ENCODE measurements at regions of chr10 and their contacts with region 1.

Region 1: DNA sequence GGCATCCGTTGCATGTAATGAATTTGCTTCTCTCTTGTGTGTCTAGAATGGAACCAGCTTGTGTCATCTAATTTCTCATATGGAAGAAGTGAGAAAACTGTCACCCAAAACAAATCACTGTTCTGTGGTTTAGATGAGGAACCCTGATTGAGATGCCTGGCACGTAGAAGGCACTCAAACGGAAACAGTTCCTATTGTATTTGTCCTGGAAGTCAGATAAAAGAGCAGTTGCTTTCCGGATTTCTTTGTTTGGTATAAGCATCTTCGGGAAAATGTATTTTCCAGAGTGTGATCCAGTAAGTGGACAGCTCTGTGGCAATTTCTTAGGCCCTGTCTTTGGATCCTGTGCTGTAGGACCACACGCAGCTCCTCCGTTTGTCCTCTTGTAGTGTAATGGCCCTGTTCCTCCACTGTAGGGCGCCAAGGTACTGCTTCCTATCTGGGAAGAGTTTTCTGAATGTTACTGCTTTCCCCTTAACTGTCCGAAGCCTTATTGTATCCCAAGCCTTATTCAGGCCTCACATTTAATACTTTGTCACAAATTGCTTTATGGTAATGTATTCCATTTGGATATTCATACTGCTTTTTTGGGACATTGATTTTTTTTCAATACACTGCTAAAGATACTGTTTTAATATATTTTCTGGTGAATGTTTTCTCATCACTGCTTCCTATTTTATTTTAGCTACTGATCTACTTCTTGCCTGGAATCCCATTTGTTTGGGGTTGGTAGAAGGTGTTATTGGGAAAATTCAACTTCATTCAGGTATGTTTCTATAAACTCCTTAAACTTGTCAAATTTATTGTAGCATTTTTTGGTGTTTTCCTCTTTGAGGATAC is 24.8 kb downstream of the INPP5F start:
- DNase-seq: peak; percentile 55
- H3K4me3 Mint-ChIP-seq: no peak overlapping the region
- H3K27ac Mint-ChIP-seq: no peak overlapping the region
- H3K4me1 Mint-ChIP-seq: peaks cover 12% of the 10 kb centered on the region
- H3K27me3 Mint-ChIP-seq: no peaks in the 10 kb centered on the region
- CTCF ChIP-seq: peak; percentile 69

Region 2: DNA sequence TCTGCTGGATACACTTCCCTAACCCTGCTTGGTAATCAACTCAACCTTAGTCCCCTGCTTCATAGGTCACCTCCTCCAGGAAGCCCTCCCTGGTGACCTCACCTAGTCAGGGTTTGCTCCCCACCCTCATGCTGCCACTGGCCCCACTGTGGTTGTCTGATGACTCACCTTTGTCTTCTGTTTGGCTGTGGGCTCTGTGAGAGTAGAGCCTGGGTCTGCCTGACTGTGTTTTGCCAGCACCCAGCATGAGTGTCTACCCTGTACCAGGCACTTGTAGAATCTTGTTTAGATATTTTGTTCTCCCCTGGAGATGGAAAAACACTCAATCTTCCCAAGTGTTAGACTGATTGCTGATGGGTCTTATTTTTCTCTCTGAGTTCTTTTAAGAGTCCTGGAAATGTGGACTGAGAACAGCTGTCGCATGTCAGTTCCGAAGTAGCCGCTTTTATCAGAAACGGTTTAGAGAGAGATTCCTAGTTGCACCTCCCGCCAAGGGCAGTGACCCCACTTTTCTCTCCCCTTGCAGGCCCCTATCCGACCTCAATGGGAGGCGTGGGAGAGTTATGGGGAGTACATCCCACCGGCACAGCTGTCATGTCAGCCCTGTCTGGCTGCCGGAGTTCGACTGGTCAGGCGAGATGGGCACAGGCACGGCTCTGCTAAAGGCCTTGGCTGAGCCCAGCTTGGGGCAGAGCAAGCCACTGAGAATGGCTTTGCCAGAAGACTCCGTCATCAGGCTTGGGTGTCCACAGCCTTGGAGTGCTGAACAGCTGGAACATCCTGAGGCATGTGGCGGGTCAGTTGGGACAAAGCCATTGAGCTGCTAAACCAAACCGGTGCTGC is 408.9 kb before region 1 on chr10:
- CTCF ChIA-PET with region 1: no interaction called
- intact Hi-C with region 1: no loop called
- DNase-seq: peak; percentile 18
- H3K4me3 Mint-ChIP-seq: no peak overlapping the region
- H3K27ac Mint-ChIP-seq: no peak overlapping the region
- H3K4me1 Mint-ChIP-seq: no peaks in the 10 kb centered on the region
- H3K27me3 Mint-ChIP-seq: peaks cover 15% of the 10 kb centered on the region
- CTCF ChIP-seq: no peak

Region 3: DNA sequence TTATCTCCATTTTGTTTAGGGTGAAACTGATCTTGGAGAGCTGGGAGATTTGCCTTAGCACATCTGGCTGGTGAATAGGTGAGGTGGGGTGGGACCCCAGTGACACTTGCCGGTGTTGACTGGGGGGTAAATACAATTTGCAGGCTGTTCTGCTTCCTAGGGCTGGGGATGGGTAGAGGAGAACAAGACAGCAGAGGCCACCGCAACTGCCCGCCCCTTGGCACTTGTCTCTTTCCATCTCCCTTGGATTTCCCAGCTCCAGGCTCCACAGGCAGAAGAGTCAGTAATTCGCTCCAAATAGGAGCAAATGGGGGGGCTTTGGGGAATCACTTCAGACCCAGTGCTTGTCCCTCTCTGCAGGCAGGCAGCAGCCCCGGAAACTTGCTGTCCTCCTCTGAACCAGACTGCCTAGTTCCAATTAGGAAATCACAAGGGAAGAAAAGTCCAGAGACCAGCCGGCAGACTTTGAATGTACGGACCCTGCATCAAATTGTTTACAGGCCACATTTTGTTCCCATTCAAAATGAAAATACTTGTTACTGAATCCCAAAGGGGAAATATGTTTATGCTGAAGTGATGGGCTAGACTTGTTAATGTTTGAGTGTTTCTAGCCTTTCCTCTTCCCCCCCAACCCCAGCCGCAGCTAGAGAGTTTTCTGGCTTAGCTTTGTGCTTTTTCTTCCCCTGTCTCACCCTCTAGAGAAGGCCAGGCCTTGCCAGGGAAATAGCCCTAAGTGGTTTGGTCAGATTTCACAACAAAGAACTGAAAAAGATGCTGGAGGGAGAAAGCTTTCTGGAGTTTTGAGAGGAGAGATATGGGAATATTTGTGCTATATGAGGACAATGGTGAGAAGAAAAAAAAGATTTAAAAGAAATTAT is 34.7 kb before region 1 on chr10:
- CTCF ChIA-PET with region 1: no interaction called
- intact Hi-C with region 1: no loop called
- DNase-seq: no peak
- H3K4me3 Mint-ChIP-seq: no peak overlapping the region
- H3K27ac Mint-ChIP-seq: no peak overlapping the region
- H3K4me1 Mint-ChIP-seq: no peaks in the 10 kb centered on the region
- H3K27me3 Mint-ChIP-seq: no peaks in the 10 kb centered on the region
- CTCF ChIP-seq: no peak

Region 4: GRCh38 chr10:119798736-119799135 is 48.1 kb after region 1 on chr10:
- CTCF ChIA-PET with region 1: no interaction called
- intact Hi-C with region 1: loop called (anchors 5 kb)
- DNase-seq: peak; percentile 1
- H3K4me3 Mint-ChIP-seq: no peak overlapping the region
- H3K27ac Mint-ChIP-seq: no peak overlapping the region
- H3K4me1 Mint-ChIP-seq: no peaks in the 10 kb centered on the region
- H3K27me3 Mint-ChIP-seq: no peaks in the 10 kb centered on the region
- CTCF ChIP-seq: no peak

Region 5: GRCh38 chr10:119834188-119834587 is 83.6 kb after region 1 on chr10:
- CTCF ChIA-PET with region 1: interaction called, 3 read pairs
- intact Hi-C with region 1: loop called (anchors 5 kb)
- DNase-seq: no peak
- H3K4me3 Mint-ChIP-seq: no peak overlapping the region
- H3K27ac Mint-ChIP-seq: no peak overlapping the region
- H3K4me1 Mint-ChIP-seq: peaks cover 8% of the 10 kb centered on the region
- H3K27me3 Mint-ChIP-seq: no peaks in the 10 kb centered on the region
- CTCF ChIP-seq: no peak

Region 6: DNA sequence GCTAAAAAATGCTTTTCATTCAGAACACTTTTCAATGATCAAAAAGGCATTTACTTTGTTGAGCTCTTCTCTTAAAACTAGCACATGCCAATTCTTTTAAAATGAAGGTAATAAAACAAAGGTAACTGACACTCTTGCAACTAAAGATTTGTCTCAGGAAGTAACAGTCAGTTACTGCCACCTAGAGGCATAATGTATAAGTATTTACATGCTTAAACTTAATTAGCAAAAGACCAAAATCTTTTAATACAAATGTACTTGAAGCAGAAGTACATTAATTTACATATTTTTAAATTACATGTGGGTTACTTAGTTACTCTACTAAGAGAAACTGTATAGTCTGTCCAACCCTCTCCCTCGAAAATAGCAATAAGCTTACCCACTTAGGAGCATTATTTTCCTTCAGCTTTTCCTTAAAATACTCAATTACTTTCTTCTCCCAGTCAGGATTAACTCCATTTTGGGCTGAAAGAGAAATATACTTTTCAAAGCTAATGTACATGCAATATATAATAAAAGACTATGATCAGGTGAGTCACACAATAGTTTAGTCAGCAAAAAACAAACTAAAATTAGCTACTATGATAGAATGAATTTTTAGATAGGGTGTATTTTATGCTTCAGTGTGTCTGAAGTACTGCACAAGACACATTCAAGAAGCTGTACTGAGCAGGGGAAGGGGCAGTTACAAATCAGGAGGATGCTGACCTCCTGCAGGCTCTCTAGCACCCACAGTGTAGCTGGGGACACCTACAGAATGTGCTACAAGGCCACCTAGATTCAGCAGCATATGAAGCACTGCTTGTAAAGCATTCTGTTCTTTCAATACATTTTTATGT is 109.0 kb after region 1 on chr10:
- CTCF ChIA-PET with region 1: interaction called, 7 read pairs
- intact Hi-C with region 1: loop called (anchors 2 kb)
- DNase-seq: no peak
- H3K4me3 Mint-ChIP-seq: no peak overlapping the region
- H3K27ac Mint-ChIP-seq: no peak overlapping the region
- H3K4me1 Mint-ChIP-seq: peaks cover 7% of the 10 kb centered on the region
- H3K27me3 Mint-ChIP-seq: no peaks in the 10 kb centered on the region
- CTCF ChIP-seq: peak; percentile 17

Region 7: GRCh38 chr10:120262857-120263547 is 512.4 kb after region 1 on chr10:
- CTCF ChIA-PET with region 1: no interaction called
- intact Hi-C with region 1: no loop called
- DNase-seq: no peak
- H3K4me3 Mint-ChIP-seq: no peak overlapping the region
- H3K27ac Mint-ChIP-seq: no peak overlapping the region
- H3K4me1 Mint-ChIP-seq: no peaks in the 10 kb centered on the region
- H3K27me3 Mint-ChIP-seq: peaks cover 30% of the 10 kb centered on the region
- CTCF ChIP-seq: no peak

Region 8: GRCh38 chr10:120336911-120337540 is 586.4 kb after region 1 on chr10:
- CTCF ChIA-PET with region 1: no interaction called
- intact Hi-C with region 1: loop called (anchors 5 kb)
- DNase-seq: peak; percentile 53
- H3K4me3 Mint-ChIP-seq: no peak overlapping the region
- H3K27ac Mint-ChIP-seq: no peak overlapping the region
- H3K4me1 Mint-ChIP-seq: no peaks in the 10 kb centered on the region
- H3K27me3 Mint-ChIP-seq: no peaks in the 10 kb centered on the region
- CTCF ChIP-seq: peak; percentile 31

Measured in Calu3 (cell line).